HCT116 (cell line): ENCODE measurements at regions of chr10 and their contacts with region 1.

Region 1: DNA sequence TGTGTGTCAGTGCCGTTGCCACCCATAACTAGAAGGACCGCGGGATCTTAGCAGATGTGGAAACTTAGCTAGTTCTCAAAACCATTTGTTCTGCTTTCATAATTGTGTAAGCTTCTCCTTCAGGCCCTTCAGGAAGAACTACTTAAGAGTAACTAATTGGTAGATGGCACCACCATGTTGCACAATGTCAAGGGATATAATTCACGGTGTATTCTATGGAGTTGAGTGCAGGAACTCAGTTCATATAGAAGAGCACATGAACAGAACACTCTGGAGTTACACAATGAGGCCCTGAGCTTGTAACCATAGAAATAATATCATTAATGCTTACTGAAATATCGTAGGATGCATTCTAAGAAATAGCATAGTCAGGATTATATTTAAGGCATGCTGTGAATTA is 126.5 kb upstream of the GAD2 start:
- DNase-seq: no peak
- ATAC-seq: no peak
- H3K4me3 ChIP-seq: no peak overlapping the region
- H3K27ac ChIP-seq: no peak overlapping the region
- H3K4me1 ChIP-seq: no peaks in the 10 kb centered on the region
- H3K27me3 ChIP-seq: peaks cover 5% of the 10 kb centered on the region; the same call in 1 of the 2 replicates
- CTCF ChIP-seq: no peak
- POLR2A ChIP-seq: no peak
- RAD21 ChIP-seq: no peak

Region 2: DNA sequence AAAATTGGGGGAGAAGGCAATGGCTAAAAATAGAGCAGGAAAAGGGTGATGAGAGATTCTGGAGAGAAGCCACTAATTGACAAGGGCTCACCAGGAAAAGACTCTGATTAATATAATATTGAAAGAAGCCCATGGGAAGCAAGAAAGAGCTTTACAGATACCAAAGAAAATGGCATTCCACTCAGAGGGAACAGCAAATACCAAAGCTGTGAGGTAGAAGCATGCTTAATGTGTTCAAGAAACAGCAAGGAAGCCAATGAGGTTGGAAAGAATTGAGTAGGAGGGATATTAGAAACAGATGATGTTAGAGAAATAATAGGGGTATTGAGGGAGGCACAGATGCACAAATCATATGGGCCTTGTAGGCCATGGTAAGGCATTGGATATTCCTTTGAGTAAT is 25.9 kb before region 1 on chr10:
- CTCF ChIA-PET with region 1: no interaction called
- POLR2A ChIA-PET with region 1: no interaction called
- RAD21 ChIA-PET with region 1: no interaction called
- intact Hi-C with region 1: loop called (anchors 1 kb)
- DNase-seq: no peak
- ATAC-seq: no peak
- H3K4me3 ChIP-seq: no peak overlapping the region
- H3K27ac ChIP-seq: no peak overlapping the region
- H3K4me1 ChIP-seq: no peaks in the 10 kb centered on the region
- H3K27me3 ChIP-seq: 0 out of 2 replicates have a peak, but pooled peaks cover 9% of the 10 kb centered on the region
- CTCF ChIP-seq: no peak
- POLR2A ChIP-seq: no peak
- RAD21 ChIP-seq: no peak